GM12878 (cell line): ENCODE measurements at regions of chr1 and their contacts with region 1.

Region 1: DNA sequence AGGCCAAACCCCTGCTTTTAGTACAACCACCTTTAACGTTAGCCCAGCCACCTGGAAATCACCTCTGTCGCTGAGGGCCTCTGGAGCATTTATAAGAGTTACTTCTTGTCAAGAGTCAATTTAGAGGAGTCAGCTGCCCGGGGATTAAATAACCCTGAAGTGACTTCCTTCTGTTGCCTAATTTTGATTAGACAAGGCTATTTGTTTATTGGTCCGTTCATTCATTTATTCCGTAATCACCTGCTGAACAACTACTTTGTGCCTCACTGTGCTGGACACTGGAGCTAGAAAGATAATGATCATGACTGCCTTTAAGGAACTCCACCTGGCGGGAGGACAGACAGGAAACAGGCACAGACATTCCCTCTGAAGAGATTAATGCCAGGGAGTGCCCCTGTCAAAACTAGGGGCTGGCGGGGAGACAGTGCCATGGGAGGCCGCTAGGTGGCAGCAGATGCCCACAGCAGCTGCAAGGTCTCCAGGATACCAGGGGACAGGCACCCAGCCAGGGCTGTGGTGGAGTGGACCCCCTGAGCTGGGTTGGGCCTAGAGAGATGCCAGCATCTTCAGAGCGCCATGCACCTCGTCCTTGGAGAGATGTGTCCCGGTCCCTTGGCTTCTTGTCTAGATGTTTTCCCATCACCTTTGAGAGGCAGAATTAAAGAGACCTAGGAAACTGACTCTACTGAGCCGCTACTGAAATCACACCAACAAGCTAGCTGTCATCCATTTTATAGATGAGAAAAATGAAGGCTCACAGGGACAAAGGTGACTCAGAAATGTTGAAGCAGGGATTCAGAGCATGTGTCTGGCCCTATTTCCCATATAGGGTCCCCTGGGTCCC is 3.7 kb downstream of the REN start:
- DNase-seq: no peak
- ATAC-seq: peak; percentile 99
- H3K4me3 ChIP-seq: no peak overlapping the region
- H3K27ac ChIP-seq: no peak overlapping the region
- H3K4me1 ChIP-seq: no peaks in the 10 kb centered on the region
- H3K27me3 ChIP-seq: no peaks in the 10 kb centered on the region; a peak in 1 of 4 replicates
- CTCF ChIP-seq: peak; percentile 94 to 99 (median 99)
- EP300 ChIP-seq: no peak
- POLR2A ChIP-seq: no peak
- RAD21 ChIP-seq: peak; percentile 84

Region 2: GRCh38 chr1:203765029-203765837 is 397.2 kb before region 1 on chr1 and contains the start of gene LAX1:
- CTCF ChIA-PET with region 1: no interaction called
- POLR2A ChIA-PET with region 1: no interaction called
- RAD21 ChIA-PET with region 1: no interaction called
- SMC1A ChIA-PET with region 1: no interaction called
- in situ Hi-C with region 1: no loop called
- intact Hi-C with region 1: no loop called
- DNase-seq: peak; percentile 77
- ATAC-seq: peak; percentile 92
- H3K4me3 ChIP-seq: peak within 1 kb of the TSS; percentile 57
- H3K27ac ChIP-seq: peak within 1 kb of the TSS; percentile 96
- H3K4me1 ChIP-seq: peaks cover 14% of the 10 kb centered on the region
- H3K27me3 ChIP-seq: no peaks in the 10 kb centered on the region
- CTCF ChIP-seq: no peak
- EP300 ChIP-seq: peak; percentile 34 to 51; a peak in 1 of 4 replicates
- POLR2A ChIP-seq: peak; percentile 96
- RAD21 ChIP-seq: no peak
- polyA plus RNA-seq, gene LAX1: 5.2 to 6.9 TPM

Region 3: DNA sequence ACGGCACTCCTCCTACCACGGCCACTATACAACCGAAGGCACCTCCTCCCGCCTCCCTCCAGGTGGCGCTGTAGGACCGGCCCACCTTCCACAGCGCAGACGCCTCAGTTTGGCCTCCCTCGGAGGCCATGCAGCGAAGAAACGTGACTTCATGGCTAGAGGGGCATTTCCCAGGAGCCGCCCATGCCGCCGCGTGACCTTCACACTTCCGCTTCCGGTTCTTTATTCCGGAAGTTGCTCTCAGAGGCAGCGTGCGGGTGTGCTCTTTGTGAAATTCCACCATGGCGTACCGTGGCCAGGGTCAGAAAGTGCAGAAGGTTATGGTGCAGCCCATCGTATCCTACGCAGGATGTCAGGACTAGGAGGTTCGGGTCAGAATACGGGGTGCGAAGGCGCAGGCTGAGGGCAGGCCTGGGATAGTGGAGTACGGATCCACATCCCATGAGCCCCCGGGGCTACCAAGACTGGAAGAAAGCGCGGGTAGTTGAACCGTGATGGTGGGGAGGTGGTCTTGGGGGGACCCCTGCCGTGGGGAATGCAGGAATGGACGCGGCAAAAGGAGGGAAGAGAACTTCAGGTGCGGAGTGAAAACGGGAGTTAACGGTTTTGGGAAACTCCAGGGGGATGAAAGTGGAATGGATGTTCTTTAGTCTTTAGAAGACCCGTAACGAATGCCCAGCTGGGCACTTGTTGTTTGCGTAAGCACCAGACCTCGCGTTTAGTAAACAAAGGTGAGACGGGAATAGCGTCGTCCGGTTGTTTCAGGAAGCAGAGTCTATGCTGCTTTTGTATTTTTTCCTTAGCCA is 300.9 kb before region 1 on chr1 and contains the start of gene SNRPE:
- CTCF ChIA-PET with region 1: interaction called, 4 read pairs
- POLR2A ChIA-PET with region 1: no interaction called
- RAD21 ChIA-PET with region 1: no interaction called
- SMC1A ChIA-PET with region 1: no interaction called
- in situ Hi-C with region 1: no loop called
- intact Hi-C with region 1: loop called (anchors 1 kb)
- DNase-seq: peak; percentile 92
- ATAC-seq: peak; percentile 97
- H3K4me3 ChIP-seq: peak within 1 kb of the TSS; percentile 80
- H3K27ac ChIP-seq: peak within 1 kb of the TSS; percentile 94
- H3K4me1 ChIP-seq: peaks cover 4% of the 10 kb centered on the region; the same call in 1 of the 2 replicates
- H3K27me3 ChIP-seq: no peaks in the 10 kb centered on the region
- CTCF ChIP-seq: peak; percentile 94 to 96 (median 94)
- EP300 ChIP-seq: no peak
- POLR2A ChIP-seq: peak; percentile 97
- RAD21 ChIP-seq: peak; percentile 89
- polyA plus RNA-seq, gene SNRPE: 1,331 to 1,384 TPM

Region 4: GRCh38 chr1:204177133-204177532 is 14.7 kb after region 1 on chr1:
- CTCF ChIA-PET with region 1: interaction called, 18 read pairs
- POLR2A ChIA-PET with region 1: no interaction called
- RAD21 ChIA-PET with region 1: no interaction called
- SMC1A ChIA-PET with region 1: interaction called, 3 read pairs
- in situ Hi-C with region 1: no loop called
- intact Hi-C with region 1: no loop called
- DNase-seq: no peak
- ATAC-seq: no peak
- H3K4me3 ChIP-seq: no peak overlapping the region
- H3K27ac ChIP-seq: no peak overlapping the region
- H3K4me1 ChIP-seq: no peaks in the 10 kb centered on the region
- H3K27me3 ChIP-seq: peaks cover 0 to 2% of the 10 kb centered on the region in 2 experiments; a peak in 2 of 4 replicates
- CTCF ChIP-seq: no peak
- EP300 ChIP-seq: no peak
- POLR2A ChIP-seq: no peak
- RAD21 ChIP-seq: no peak

Region 5: DNA sequence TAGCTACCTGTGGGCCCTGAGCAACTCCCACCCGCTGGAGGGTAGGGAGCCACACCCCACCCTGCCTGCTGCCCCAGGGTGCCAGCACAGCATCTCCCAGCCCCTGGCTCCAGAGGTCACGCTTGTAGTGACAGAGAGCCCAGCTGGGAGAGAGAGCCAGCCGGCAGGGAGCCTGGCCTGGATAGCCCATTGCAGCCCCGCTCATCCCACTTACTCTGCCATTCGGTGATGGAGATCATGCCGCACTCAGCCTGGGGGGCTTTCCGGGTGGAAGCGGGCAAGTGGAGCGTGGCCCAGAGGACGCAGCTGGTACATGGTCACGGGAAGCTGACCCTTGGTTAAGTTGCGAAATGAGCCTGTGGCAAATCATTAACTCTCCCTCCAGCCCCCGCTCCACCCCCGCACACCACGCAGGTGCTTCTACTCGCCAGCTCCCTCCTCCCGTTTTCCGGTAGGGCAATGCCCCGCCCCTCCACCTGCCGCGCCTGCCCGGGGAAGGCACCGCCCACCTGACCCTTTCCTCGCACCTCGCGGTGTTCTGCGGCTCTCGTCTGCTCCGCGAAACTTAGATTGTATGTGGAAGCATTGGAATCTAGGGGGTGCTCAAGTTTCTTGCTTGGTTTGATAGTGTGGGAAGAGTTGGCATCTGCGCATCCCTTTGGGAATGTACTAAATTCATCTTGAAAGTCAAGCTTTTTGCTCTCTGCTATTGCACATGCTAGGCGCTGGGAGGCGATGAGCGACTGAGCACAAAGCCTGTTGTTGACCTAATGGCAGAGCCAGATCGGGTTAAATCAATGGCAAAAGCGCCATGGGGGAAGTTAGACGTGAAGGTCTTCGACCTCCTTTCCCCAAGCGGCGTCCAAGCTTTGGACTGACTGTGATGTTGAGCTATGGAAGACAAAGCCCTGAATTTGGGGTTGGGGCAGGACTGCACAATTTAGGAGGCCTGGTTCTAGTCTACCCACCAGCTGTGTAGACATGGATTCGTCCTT is 51.5 kb after region 1 on chr1 and contains the start of gene GOLT1A:
- CTCF ChIA-PET with region 1: interaction called, 6 read pairs
- POLR2A ChIA-PET with region 1: no interaction called
- RAD21 ChIA-PET with region 1: interaction called, 11 read pairs
- SMC1A ChIA-PET with region 1: interaction called, 8 read pairs
- in situ Hi-C with region 1: loop called (anchors 5 kb)
- intact Hi-C with region 1: no loop called
- DNase-seq: peak; percentile 28
- ATAC-seq: peak; percentile 84
- H3K4me3 ChIP-seq: no peak within 1 kb of the TSS
- H3K27ac ChIP-seq: no peak within 1 kb of the TSS
- H3K4me1 ChIP-seq: no peaks in the 10 kb centered on the region
- H3K27me3 ChIP-seq: peaks cover 0 to 2% of the 10 kb centered on the region in 2 experiments; a peak in 1 of 4 replicates
- CTCF ChIP-seq: peak; percentile 22 to 26 (median 25); a peak in 4 of 6 replicates
- EP300 ChIP-seq: 0 out of 4 replicates have a peak, but pooled peaks of 1 of the 2 experiments have one; percentile 21
- POLR2A ChIP-seq: no peak
- RAD21 ChIP-seq: peak; percentile 25; the same call in 1 of the 2 replicates
- polyA plus RNA-seq, gene GOLT1A: 0.09 TPM in 1 of 2 experiments, not detected in the other